A673 (cell line): ENCODE measurements at regions of chr14 and their contacts with region 1.

Region 1: DNA sequence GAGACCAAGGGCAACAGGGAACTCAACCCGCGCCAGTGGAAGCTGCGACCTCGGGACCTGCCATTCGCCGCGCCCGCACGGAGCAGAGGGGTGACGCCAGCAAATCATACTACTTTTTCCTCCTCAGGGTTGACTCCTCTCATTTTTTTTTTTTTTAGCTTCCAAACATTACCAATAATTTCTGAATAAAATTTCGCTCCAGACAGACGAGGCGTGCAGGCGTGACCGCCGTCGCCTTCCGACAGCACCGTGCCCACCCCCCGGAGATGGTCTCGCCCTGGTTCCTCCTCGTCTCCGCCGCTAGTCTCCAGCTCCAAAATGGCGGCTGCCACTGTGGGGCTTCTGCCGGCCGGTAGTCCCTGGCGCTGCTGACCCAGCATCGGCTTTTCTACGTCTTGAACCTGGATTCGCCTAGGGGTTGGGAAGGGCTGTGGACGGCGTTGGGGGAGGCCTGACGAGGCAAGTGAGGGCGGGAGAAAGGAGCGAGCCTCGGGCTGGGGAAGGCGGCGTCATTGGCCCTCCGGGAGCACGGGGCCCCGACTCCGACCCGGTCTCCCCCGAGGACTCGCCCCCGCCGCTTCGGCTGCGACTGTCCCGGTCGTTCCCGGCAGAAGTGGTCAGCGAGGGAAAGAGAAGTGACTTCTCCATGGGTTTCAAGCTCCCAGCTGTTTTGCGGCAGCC is at the starts of genes CPSF2 and NDUFB1:
- DNase-seq: peak; percentile 87
- H3K4me3 ChIP-seq: peak within 1 kb of the TSS; percentile 90
- H3K27ac ChIP-seq: peak within 1 kb of the TSS; percentile 99
- H3K4me1 ChIP-seq: peaks cover 8% of the 10 kb centered on the region
- H3K27me3 ChIP-seq: no peaks in the 10 kb centered on the region
- CTCF ChIP-seq: no peak
- total RNA-seq, gene CPSF2: 119 and 129 TPM in 2 replicates
- total RNA-seq, gene NDUFB1: 140 and 154 TPM in 2 replicates

Region 2: DNA sequence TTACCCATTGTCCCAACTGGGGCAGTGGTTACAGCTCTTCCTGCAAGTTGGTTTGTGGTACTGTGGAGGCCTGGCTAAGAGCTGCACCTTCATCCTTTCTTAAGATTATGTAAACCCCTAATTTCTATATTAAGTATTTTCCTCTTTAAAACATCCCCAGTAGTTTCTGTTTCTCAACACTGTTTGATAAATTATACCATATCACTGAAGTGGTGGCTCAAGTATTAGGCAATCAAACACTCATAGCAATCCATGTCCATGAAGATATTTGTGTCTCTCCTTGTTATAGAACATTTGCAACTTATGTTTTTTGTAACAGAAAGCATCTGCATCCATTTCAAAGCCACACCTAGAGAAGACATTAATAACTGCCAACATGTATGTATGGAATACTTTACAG is 47.3 kb before region 1 on chr14:
- CTCF ChIA-PET with region 1: no interaction called
- POLR2A ChIA-PET with region 1: interaction called, 11 read pairs
- intact Hi-C with region 1: no loop called
- DNase-seq: no peak
- H3K4me3 ChIP-seq: no peak overlapping the region
- H3K27ac ChIP-seq: no peak overlapping the region
- H3K4me1 ChIP-seq: no peaks in the 10 kb centered on the region
- H3K27me3 ChIP-seq: no peaks in the 10 kb centered on the region
- CTCF ChIP-seq: no peak

Region 3: GRCh38 chr14:92106143-92106926 is 15.5 kb before region 1 on chr14 and contains the start of gene ATXN3:
- CTCF ChIA-PET with region 1: interaction called, 19 read pairs
- POLR2A ChIA-PET with region 1: interaction called, 3 read pairs
- intact Hi-C with region 1: no loop called
- DNase-seq: peak; percentile 99
- H3K4me3 ChIP-seq: peak within 1 kb of the TSS; percentile 70
- H3K27ac ChIP-seq: peak within 1 kb of the TSS; percentile 86
- H3K4me1 ChIP-seq: peaks cover 5% of the 10 kb centered on the region
- H3K27me3 ChIP-seq: no peaks in the 10 kb centered on the region
- CTCF ChIP-seq: peak; percentile 82
- total RNA-seq, gene ATXN3: 27.3 and 32.4 TPM in 2 replicates

Region 4: DNA sequence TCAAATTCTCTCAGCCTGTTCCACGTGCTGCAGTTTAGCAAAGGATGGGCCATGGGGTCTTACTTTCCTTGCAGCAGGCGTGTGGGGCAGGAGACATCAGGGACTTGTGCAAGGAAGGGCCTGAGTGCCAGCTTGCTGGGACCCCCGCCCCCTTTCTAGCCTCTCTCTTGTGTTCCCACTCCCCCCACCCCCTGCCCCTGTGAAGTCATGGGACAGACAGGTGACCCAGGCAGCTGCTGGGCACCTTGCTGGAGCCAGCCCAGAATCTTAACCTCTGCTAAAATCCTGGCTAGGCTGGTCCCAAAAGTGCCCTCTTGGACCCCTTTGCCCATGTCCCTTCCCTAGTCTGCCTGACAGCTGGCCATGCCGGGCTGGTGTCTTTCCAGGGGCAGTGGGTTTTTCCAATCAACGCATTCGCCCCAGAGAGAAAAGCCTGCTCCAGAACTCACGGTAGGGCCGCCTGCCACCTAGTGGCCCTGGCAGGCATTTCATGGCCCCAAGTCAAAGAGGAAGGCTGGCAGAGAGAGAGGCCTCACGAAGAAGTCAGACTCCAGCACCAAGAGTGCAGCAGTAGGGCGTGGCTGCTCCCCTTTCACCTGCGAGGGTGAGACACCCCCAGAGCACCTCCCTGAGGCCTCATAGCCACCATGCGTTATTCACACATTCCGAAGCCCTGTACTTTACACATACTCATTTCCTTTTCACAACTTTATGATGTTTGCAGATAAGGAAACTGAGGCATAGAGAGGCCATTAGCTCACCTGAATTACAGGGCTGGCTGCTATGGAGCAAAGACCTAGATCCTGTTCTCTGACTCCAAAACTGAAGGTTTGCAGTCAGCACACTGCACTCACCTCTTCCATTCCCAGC is 559.2 kb after region 1 on chr14:
- CTCF ChIA-PET with region 1: no interaction called
- POLR2A ChIA-PET with region 1: interaction called, 12 read pairs
- intact Hi-C with region 1: no loop called
- DNase-seq: peak; percentile 81
- H3K4me3 ChIP-seq: no peak overlapping the region
- H3K27ac ChIP-seq: no peak overlapping the region
- H3K4me1 ChIP-seq: no peaks in the 10 kb centered on the region
- H3K27me3 ChIP-seq: no peaks in the 10 kb centered on the region
- CTCF ChIP-seq: peak; percentile 90